Astrocyte of the cerebellum (primary cell): ENCODE measurements at regions of chr12 and their contacts with region 1.

Region 1: DNA sequence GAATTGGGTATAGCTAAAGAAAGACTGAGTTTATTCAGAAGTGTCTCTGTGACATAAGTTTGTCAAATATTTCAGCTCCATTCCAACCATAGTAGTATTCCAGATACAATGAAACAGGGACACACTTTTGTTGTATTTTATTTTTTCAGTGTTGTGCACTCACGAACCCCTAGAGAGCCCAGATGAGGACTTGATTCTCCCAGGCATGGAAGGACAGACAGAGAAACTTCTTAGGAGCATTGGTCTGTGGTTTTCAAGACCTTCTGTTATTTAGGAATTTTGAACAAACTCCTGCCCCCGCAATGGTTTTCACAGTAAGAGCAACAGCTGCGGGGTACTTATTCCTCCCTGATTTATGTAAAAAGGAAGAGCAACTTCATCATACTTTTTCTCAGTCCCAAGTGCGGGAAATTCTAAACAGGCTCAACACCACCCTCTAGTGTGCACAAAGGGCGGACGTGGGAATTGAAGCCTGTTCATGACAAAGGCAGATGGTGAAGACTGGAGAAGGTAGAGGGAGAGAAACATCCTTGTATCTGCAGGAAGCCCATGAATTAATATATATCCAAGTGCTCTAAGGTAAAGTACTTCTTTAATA is 147.6 kb downstream of the PAH start:
- DNase-seq: peak; percentile 44
- H3K4me3 ChIP-seq: no peak overlapping the region
- CTCF ChIP-seq: peak; percentile 85

Region 2: DNA sequence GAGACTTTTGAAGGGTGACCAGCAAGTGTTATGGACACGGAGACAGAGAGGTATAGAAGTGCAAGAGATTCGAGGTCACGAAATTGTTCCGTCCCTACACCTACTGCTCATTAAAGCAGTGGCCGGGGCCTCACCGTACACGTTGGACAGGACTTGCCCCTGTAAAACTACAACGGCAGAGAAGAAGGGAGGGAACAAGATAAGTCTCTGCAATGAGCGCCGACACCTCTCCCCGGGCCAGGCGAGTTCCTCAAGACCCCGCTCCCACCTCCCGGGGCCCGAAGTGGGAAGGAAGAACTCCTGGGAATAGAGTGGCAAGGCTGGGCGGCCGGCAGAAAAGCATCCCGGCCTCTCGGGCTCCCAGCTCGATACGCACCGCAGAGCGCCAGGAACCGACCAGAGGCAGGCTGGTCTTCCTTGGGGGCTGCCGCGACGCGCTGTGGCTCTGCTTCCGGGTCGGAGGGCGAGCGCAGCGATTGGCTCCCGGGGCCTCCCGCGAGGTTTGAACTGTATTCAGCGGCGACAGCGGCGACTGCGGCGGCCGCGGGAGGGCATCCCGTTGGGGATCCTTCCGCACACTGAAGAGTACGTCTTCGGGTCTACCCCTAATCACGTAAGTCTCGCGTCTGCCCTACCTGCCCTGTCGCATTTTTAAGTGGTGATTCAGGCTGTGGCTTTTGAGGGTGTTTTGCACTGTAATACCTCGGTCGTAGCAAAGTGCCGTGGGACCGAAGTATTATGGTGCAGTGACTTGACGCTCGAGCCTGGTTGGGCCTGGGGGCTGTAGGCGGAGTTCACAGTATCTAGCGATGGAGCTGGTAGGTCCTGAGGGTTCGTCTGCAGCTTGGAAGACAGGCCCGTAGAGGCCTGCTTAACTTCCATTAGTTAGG is 649.5 kb before region 1 on chr12 and contains the starts of genes NUP37 and PARPBP:
- in situ Hi-C with region 1: loop called (anchors 25 kb)
- DNase-seq: peak; percentile 63
- H3K4me3 ChIP-seq: peak within 1 kb of the TSS; percentile 92
- CTCF ChIP-seq: no peak

Region 3: DNA sequence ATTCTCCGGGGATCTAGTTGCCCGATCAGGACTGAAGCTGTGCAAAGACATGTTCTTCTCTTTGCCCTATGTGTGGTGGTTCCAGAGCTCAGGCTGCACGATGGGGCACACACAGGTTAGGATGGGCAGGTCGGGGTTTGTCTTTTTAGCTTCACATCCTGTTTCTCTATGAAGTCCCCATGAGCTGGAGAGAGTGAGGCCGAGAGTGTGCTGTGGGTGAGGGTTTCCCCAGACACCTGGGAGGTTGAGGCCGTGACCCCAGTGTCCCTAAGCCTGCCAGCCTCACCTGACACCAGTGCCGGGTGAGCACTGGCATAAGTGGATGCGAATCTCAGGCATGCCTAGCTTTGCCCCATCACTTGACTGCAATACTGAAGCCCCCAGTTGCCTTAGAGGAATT is 256.1 kb before region 1 on chr12:
- in situ Hi-C with region 1: no loop called
- DNase-seq: no peak
- H3K4me3 ChIP-seq: no peak overlapping the region
- CTCF ChIP-seq: no peak